ENCODE measurements at regions of chr9 and their contacts with region 1.

Region 1: GRCh38 chr9:86193088-86193487 is 66.4 kb downstream of the C9orf153 start:
- DNase-seq: no peak
- ATAC-seq: no peak
- H3K4me3 ChIP-seq: no peak overlapping the region
- H3K27ac ChIP-seq: no peak overlapping the region
- H3K4me1 ChIP-seq: no peaks in the 10 kb centered on the region
- H3K27me3 ChIP-seq: no peaks in the 10 kb centered on the region
- CTCF ChIP-seq: no peak
- POLR2A ChIP-seq: no peak

Region 2: GRCh38 chr9:85702726-85703289 is 490.3 kb before region 1 on chr9:
- in situ Hi-C with region 1: no loop called
- intact Hi-C with region 1: no loop called
- DNase-seq: no peak
- ATAC-seq: peak in 1 of 2 donors; percentile 39
- H3K4me3 ChIP-seq: no peak overlapping the region
- H3K27ac ChIP-seq: no peak overlapping the region
- H3K4me1 ChIP-seq: peaks cover 7 to 19% of the 10 kb centered on the region in 2 donors
- H3K27me3 ChIP-seq: no peaks in the 10 kb centered on the region
- CTCF ChIP-seq: no peak
- POLR2A ChIP-seq: no peak

Region 3: GRCh38 chr9:85859765-85860164 is 333.3 kb before region 1 on chr9:
- in situ Hi-C with region 1: no loop called
- intact Hi-C with region 1: no loop called
- DNase-seq: peak in 1 of 2 donors; percentile 29
- ATAC-seq: peak; percentile 61 to 99
- H3K4me3 ChIP-seq: no peak overlapping the region
- H3K27ac ChIP-seq: peak overlapping the region in 2 of 4 donors; percentile 28 to 35
- H3K4me1 ChIP-seq: peaks cover 11 to 17% of the 10 kb centered on the region in 2 donors
- H3K27me3 ChIP-seq: no peaks in the 10 kb centered on the region
- CTCF ChIP-seq: no peak
- POLR2A ChIP-seq: no peak

Region 4: GRCh38 chr9:86275962-86276361 is 82.9 kb after region 1 on chr9:
- in situ Hi-C with region 1: no loop called
- intact Hi-C with region 1: loop called (anchors 10 kb)
- DNase-seq: no peak
- ATAC-seq: no peak
- H3K4me3 ChIP-seq: no peak overlapping the region
- H3K27ac ChIP-seq: no peak overlapping the region
- H3K4me1 ChIP-seq: peaks cover 51 to 67% of the 10 kb centered on the region in 2 donors
- H3K27me3 ChIP-seq: no peaks in the 10 kb centered on the region
- CTCF ChIP-seq: peak in 1 of 5 experiments; percentile 14
- POLR2A ChIP-seq: no peak

Region 5: GRCh38 chr9:86389628-86390027 is 196.5 kb after region 1 on chr9:
- in situ Hi-C with region 1: no loop called
- intact Hi-C with region 1: no loop called
- DNase-seq: no peak
- ATAC-seq: no peak
- H3K4me3 ChIP-seq: no peak overlapping the region
- H3K27ac ChIP-seq: no peak overlapping the region
- H3K4me1 ChIP-seq: no peaks in the 10 kb centered on the region
- H3K27me3 ChIP-seq: no peaks in the 10 kb centered on the region
- CTCF ChIP-seq: no peak
- POLR2A ChIP-seq: no peak